AG04449 (cell line): ENCODE measurements at regions of chr19 and their contacts with region 1.

Region 1: DNA sequence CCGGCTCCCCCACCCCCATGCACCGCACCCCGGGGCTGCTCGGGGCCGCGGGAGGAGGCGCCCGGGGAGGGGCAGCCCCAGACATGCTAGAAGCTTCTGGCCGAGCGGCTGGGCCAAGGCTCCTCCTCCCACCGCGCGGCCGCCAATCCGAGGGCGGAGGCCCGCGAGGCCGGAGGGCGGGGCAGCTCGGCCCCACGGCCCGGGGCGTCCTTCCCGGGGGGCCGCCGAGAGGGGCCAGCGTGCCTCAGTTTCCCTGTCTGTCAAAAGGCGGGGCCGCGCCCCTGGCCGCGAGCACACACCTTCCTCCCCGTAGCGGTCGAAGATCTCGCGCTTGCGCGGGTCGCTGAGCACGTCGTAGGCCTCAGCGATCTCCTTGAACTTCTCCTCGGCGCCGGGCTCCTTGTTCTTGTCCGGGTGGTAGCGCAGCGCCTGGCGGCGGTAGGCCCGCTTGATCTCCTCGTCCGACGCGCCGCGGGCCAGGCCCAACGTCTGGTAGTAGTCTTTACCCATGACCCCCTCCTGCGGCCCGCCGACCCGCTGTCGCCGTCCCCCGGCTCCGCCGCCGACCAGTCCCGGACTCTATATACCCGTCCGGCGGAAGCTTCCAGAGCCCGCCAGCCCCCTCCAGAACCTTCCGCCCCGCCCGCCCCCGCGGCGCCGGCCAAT is at the start of gene DNAJB1:
- DNase-seq: no peak
- H3K4me3 ChIP-seq: peak within 1 kb of the TSS; percentile 96
- CTCF ChIP-seq: no peak

Region 2: GRCh38 chr19:14237014-14237941 is 280.7 kb before region 1 on chr19:
- CTCF ChIA-PET with region 1: no interaction called
- POLR2A ChIA-PET with region 1: no interaction called
- DNase-seq: no peak
- H3K4me3 ChIP-seq: no peak overlapping the region
- CTCF ChIP-seq: no peak

Region 3: GRCh38 chr19:14505488-14506432 is 12.2 kb before region 1 on chr19:
- CTCF ChIA-PET with region 1: interaction called, 13 read pairs
- POLR2A ChIA-PET with region 1: interaction called, 34 read pairs
- DNase-seq: peak; percentile 81
- H3K4me3 ChIP-seq: no peak overlapping the region
- CTCF ChIP-seq: peak; percentile 93

Region 4: DNA sequence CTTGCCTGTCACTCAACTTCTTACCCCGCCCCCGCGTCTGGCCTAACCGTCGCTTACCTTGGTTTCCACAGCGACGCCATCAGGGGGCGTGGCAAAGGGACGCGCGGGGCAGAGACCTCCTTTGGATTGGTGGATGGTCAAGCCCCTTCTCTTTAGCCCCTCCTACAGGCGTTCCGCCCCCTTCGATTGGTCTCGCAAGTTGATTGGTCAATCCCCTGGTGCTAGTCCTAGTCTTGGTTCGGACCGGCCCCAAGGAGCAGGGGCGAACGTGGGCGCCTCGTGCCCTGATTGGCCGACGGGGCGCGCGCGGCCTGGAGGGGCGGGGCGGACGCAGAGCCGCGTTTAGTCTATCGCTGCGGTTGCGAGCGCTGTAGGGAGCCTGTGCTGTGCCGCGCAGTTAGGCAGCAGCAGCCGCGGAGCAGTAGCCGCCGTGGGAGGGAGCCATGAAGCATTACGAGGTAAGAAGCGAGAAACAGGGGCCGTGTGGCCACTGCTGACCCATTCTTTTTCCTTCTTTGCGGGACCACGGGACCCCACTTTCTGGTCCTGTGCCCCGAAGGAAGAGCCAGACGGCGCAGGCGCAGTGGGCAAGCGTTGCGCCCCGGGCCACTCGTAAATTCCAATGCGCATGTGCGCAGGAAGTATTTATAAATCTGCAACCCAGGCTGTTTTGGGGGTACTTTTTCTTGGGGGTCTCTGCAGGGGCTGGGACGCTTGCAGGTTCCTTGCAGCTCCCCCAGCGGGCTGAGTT is 11.5 kb after region 1 on chr19 and contains the start of gene TECR:
- CTCF ChIA-PET with region 1: interaction called, 4 read pairs
- POLR2A ChIA-PET with region 1: interaction called, 12 read pairs
- DNase-seq: peak; percentile 98
- H3K4me3 ChIP-seq: peak within 1 kb of the TSS; percentile 98
- CTCF ChIP-seq: no peak

Region 5: DNA sequence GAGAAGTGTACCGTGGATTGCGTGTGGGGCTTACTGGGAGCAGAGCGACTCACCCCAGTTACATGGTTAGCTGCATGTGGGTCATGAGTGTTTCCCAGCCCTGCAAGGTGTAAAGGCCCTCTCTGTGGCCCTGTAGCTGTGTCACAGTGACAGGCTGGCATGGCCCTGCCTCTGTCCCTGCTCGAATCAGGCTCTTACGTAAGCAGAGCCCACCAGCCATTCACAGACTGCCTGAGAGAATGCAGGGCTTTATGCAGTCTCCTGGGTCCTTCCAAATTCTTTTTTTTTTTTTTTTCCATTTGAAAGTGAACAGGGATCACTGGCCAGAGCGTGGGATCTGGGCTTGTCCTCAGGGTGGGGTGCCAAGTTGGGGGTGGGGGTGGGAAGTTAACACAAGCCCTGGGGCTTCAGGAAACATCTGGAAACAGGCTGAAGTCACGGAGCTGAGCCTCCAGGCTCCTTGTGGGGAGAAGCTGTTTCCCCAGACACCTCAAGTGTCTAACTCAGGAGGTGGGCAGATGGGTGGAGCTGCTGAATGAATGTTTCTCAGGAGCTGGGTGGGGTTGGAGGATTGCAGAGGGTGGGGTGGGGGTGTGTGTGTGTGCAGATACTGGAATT is 24.8 kb after region 1 on chr19:
- CTCF ChIA-PET with region 1: no interaction called
- POLR2A ChIA-PET with region 1: no interaction called
- DNase-seq: no peak
- H3K4me3 ChIP-seq: no peak overlapping the region
- CTCF ChIP-seq: no peak